CD14-positive monocyte (primary cell): ENCODE measurements at regions of chr1 and their contacts with region 1.

Region 1: DNA sequence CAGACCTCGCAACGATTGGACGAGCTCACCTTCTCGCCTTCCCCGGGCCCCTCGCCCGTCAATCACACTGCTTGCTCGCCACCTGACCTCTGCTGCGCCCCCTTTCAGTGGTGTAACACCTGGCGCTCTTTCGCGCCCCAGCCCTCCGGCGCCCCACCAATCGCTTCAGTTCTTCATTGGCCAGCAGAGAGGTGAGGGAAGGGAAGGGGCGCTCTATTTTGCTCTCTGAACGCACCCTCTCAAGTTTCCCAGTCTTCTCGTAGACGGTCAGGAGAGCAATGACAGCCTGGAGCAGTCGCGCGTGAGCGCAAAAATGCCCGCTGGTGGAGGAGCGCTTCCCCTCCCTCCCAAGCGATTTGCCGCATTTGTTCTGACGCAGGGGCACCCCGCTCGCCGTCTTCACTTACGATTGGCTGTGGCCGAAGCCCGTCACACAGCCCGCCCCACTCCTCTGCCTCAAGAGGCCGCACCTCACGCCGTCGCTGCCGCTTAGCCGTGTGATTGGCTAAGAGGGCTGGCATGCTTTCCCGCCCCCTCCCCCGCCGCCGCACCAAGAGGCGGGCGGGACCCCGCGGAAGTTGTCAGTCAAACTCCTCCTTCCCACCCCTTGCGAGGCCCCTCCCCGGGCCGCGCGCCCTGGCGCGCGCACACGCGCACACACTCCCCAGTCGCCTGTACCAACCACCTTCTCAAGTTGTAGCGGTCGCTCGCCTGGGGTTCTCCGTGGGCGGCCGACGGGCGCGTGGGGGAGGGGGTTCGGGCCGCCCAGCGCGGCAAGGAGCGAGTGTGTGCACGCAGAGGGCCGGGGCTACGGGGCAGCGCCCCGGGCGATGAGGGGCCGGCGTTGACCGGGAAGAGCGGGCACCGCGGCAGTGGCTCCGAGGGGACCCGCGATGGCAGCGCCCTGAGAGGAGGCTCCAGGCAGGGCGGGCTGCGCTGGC is at the start of gene PPP2R5A:
- DNase-seq: peak; percentile 99 to 100 (median 99)
- H3K4me3 ChIP-seq: peak within 1 kb of the TSS; percentile 84 to 99 (median 85)
- H3K4me3 Mint-ChIP-seq: peak within 1 kb of the TSS; percentile 97 to 100
- H3K27ac ChIP-seq: peak within 1 kb of the TSS; percentile 91 to 99
- H3K27ac Mint-ChIP-seq: peak within 1 kb of the TSS; percentile 97 to 100 (median 99)
- H3K4me1 ChIP-seq: peaks cover 37 to 50% of the 10 kb centered on the region in 2 donors
- H3K4me1 Mint-ChIP-seq: peaks cover 41% of the 10 kb centered on the region
- H3K27me3 ChIP-seq: no peaks in the 10 kb centered on the region
- H3K27me3 Mint-ChIP-seq: peaks cover 0 to 7% (median 0%) of the 10 kb centered on the region in 3 donors
- CTCF ChIP-seq: peak; percentile 34
- polyA plus RNA-seq, gene PPP2R5A: 28.1 to 38.4 (median 31.1) TPM

Region 2: DNA sequence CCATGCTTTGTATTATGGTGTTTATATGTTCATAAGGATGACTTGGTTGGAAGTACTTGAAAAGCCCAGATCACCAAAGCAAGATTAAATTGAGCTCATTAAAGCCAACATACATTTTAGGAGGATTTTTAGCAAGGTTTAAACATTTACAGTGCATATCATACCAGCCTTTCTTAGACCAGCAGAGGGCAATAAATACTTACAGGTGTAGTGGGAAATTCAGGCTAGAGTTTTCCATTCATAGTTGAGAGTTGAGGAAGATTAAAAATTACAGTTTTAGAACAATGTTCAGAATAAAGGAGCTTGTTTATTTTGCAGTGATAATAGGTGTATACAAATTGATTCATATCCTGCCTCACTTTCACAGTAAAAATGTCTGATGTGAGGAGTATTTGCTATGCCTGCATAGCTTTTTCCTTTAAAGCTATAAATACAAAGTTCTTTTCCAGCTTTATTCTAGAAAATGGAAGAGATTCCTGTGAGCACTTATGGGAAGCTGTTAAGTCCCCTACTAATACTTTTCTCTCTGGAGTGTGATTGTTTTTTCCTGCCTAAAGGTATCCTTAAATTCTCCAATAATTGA is 214.2 kb before region 1 on chr1:
- intact Hi-C with region 1: loop called in 1 of 2 experiments (anchors 5 kb)
- DNase-seq: peak in 2 of 3 donors; percentile 33 to 38
- H3K4me3 ChIP-seq: no peak overlapping the region
- H3K4me3 Mint-ChIP-seq: no peak overlapping the region
- H3K27ac ChIP-seq: no peak overlapping the region
- H3K27ac Mint-ChIP-seq: no peak overlapping the region
- H3K4me1 ChIP-seq: no peaks in the 10 kb centered on the region
- H3K4me1 Mint-ChIP-seq: no peaks in the 10 kb centered on the region
- H3K27me3 ChIP-seq: no peaks in the 10 kb centered on the region
- H3K27me3 Mint-ChIP-seq: no peaks in the 10 kb centered on the region
- CTCF ChIP-seq: peak; percentile 75

Region 3: GRCh38 chr1:212234431-212235395 is 50.3 kb before region 1 on chr1:
- intact Hi-C with region 1: loop called (anchors 5 to 10 kb)
- DNase-seq: peak; percentile 81 to 96 (median 92)
- H3K4me3 ChIP-seq: peak overlapping the region in 1 of 3 experiments; percentile 7
- H3K4me3 Mint-ChIP-seq: peak overlapping the region in 1 of 2 donors; percentile 36
- H3K27ac ChIP-seq: peak overlapping the region; percentile 34 to 86
- H3K27ac Mint-ChIP-seq: peak overlapping the region; percentile 87 to 99 (median 95)
- H3K4me1 ChIP-seq: peaks cover 43 to 49% of the 10 kb centered on the region in 2 donors
- H3K4me1 Mint-ChIP-seq: peaks cover 49% of the 10 kb centered on the region
- H3K27me3 ChIP-seq: no peaks in the 10 kb centered on the region
- H3K27me3 Mint-ChIP-seq: no peaks in the 10 kb centered on the region
- CTCF ChIP-seq: no peak

Region 4: GRCh38 chr1:212353181-212353580 is 68.2 kb after region 1 on chr1:
- intact Hi-C with region 1: no loop called
- DNase-seq: no peak
- H3K4me3 ChIP-seq: no peak overlapping the region
- H3K4me3 Mint-ChIP-seq: no peak overlapping the region
- H3K27ac ChIP-seq: peak overlapping the region in 1 of 2 donors; percentile 42
- H3K27ac Mint-ChIP-seq: peak overlapping the region in 1 of 7 donors; percentile 79
- H3K4me1 ChIP-seq: no peaks in the 10 kb centered on the region
- H3K4me1 Mint-ChIP-seq: peaks cover 1% of the 10 kb centered on the region
- H3K27me3 ChIP-seq: no peaks in the 10 kb centered on the region
- H3K27me3 Mint-ChIP-seq: no peaks in the 10 kb centered on the region
- CTCF ChIP-seq: no peak